Activated CD4-positive, alpha-beta memory T cell treated with anti-CD3 and anti-CD28 coated beads for 36 hours (primary cell): ENCODE measurements at regions of chr10 and their contacts with region 1.

Region 1: DNA sequence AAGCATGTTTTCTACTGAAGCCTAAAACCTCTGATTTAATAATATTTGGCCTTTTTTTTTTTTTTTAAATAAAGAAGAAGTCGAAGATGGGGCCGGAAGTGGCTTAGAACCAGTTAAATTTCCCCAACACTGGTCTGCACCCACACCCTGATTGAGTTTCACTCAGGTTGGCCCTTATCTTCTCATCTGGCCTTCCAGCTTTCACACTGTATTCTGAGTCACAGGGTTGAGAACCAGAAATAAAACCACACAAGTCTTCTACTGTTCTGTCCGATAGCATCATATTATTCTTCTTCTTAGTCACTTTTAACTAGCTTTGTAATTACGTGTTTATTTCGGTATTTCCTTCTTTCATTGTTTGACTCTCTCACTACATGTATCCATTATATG is 9.9 kb downstream of the ZNF365 start:
- DNase-seq: peak; percentile 73
- H3K4me3 Mint-ChIP-seq: no peak overlapping the region
- H3K27ac Mint-ChIP-seq: peak overlapping the region; percentile 48
- H3K4me1 Mint-ChIP-seq: peaks cover 61% of the 10 kb centered on the region
- H3K27me3 Mint-ChIP-seq: no peaks in the 10 kb centered on the region

Region 2: GRCh38 chr10:61896854-61897661 is 487.0 kb before region 1 on chr10:
- CTCF ChIA-PET with region 1: no interaction called
- POLR2A ChIA-PET with region 1: no interaction called
- intact Hi-C with region 1: loop called (anchors 5 kb)
- DNase-seq: peak; percentile 70
- H3K4me3 Mint-ChIP-seq: peak overlapping the region; percentile 66
- H3K27ac Mint-ChIP-seq: peak overlapping the region; percentile 95
- H3K4me1 Mint-ChIP-seq: peaks cover 43% of the 10 kb centered on the region
- H3K27me3 Mint-ChIP-seq: no peaks in the 10 kb centered on the region

Region 3: DNA sequence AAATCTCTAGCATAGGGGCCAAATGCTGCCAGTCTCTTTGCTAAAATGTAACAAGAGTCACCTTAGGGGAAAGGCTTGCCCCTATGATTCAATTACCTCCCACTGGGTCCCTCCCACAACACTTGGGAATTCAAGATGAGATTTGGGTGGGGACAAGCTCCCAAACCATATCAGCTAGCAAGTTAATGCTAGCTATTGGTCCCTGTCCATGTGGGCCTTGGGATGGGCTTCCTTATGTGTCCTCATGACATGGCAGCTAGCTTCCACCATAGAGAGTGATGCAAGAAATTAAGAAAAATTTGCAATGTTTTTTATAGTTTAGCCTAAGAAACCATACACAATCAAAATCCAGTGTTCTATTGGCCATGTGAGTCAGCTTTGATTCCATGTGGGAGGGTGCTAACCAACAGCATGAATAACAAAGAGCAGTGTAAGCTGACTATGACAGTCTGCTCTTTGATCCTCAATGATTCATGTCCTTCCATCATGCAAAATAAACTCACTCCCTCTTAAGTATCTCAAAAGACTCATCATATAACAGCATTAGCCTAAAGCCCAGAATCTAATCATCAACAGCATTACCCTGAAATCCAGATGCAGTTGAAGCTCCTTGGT is 31.6 kb before region 1 on chr10:
- CTCF ChIA-PET with region 1: no interaction called
- POLR2A ChIA-PET with region 1: no interaction called
- intact Hi-C with region 1: loop called (anchors 2 kb)
- DNase-seq: peak; percentile 53
- H3K4me3 Mint-ChIP-seq: no peak overlapping the region
- H3K27ac Mint-ChIP-seq: no peak overlapping the region
- H3K4me1 Mint-ChIP-seq: peaks cover 20% of the 10 kb centered on the region
- H3K27me3 Mint-ChIP-seq: no peaks in the 10 kb centered on the region

Region 4: DNA sequence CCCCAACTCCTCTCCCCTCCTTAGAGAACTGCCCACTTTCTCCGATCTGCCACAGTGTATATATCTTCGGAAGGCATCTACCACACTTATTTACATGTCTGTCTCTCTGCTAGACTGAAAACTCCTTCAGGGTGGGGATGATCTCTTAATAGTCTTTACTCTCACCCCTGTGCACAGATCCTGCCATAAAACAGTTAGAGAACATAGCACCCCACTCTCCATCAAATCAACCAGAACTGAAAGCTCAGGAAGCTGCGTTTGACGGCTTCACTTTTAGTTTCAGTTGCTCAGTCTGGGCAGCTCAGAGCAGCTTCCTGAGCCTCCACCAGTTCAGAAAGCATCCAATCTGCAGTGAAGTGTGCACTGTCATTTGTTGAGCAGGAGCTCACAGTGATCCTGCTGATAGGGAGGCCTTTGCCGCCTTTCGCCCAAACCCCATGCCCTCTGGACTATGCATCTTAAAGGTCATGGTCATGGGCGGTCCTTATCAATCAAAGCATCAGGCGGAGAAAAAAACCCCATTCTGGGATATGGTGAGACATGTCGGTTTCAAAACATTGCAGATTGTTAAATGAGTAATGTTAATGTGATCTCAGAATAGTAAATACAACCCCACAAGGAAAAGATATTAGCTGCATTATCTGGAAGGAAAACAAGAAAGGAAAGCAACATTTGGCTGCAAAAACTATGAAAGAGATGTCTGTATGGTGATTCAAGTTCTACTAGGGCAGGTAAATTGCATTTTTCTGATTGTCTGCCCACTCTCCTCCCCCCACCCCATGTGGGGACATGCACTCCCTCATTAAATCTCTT is 253.4 kb after region 1 on chr10:
- CTCF ChIA-PET with region 1: no interaction called
- POLR2A ChIA-PET with region 1: no interaction called
- intact Hi-C with region 1: loop called (anchors 5 kb)
- DNase-seq: peak; percentile 84
- H3K4me3 Mint-ChIP-seq: no peak overlapping the region
- H3K27ac Mint-ChIP-seq: no peak overlapping the region
- H3K4me1 Mint-ChIP-seq: peaks cover 26% of the 10 kb centered on the region
- H3K27me3 Mint-ChIP-seq: no peaks in the 10 kb centered on the region

Region 5: DNA sequence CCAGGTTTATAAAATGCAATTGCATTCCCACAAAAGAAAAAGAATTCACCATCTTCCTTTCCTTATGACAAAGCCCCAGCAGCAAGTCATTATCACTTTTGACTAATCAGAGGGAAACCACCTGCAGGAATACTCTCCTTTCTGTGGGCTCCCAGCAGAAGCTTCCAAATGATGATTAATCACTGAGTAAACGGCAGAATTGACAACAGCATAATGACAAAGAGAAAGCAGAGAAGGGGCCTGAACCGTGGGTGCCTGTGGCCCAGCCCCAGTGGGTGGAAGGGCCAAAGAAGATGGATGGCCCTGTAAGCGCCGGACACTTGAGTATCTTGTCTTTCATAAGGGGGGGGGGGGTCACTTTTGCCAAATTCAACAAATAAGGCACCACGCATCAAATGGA is 596.6 kb after region 1 on chr10:
- CTCF ChIA-PET with region 1: no interaction called
- POLR2A ChIA-PET with region 1: no interaction called
- intact Hi-C with region 1: loop called (anchors 1 kb)
- DNase-seq: peak; percentile 56
- H3K4me3 Mint-ChIP-seq: no peak overlapping the region
- H3K27ac Mint-ChIP-seq: no peak overlapping the region
- H3K4me1 Mint-ChIP-seq: peaks cover 26% of the 10 kb centered on the region
- H3K27me3 Mint-ChIP-seq: peaks cover 11% of the 10 kb centered on the region